SK-N-SH (cell line): ENCODE measurements at regions of chr9 and their contacts with region 1.

Region 1: GRCh38 chr9:131056781-131057506 is 39.4 kb upstream of the AIF1L start:
- DNase-seq: no peak
- H3K4me3 ChIP-seq: no peak overlapping the region
- H3K27ac ChIP-seq: no peak overlapping the region
- H3K4me1 ChIP-seq: peaks cover 0 to 3% of the 10 kb centered on the region in 2 experiments; a peak in 1 of 4 replicates
- H3K27me3 ChIP-seq: no peaks in the 10 kb centered on the region; the same call in 1 of the 2 replicates
- CTCF ChIP-seq: no peak
- EP300 ChIP-seq: no peak
- RAD21 ChIP-seq: no peak

Region 2: GRCh38 chr9:131076347-131077195 is 19.6 kb after region 1 on chr9:
- CTCF ChIA-PET with region 1: interaction called, 12 read pairs
- POLR2A ChIA-PET with region 1: no interaction called
- DNase-seq: no peak
- H3K4me3 ChIP-seq: no peak overlapping the region
- H3K27ac ChIP-seq: no peak overlapping the region
- H3K4me1 ChIP-seq: no peaks in the 10 kb centered on the region
- H3K27me3 ChIP-seq: 0 out of 2 replicates have a peak, but pooled peaks cover 6% of the 10 kb centered on the region
- CTCF ChIP-seq: no peak
- EP300 ChIP-seq: no peak
- RAD21 ChIP-seq: no peak

Region 3: GRCh38 chr9:131082774-131083512 is 26.0 kb after region 1 on chr9:
- CTCF ChIA-PET with region 1: interaction called, 15 read pairs
- POLR2A ChIA-PET with region 1: no interaction called
- DNase-seq: no peak
- H3K4me3 ChIP-seq: no peak overlapping the region
- H3K27ac ChIP-seq: no peak overlapping the region
- H3K4me1 ChIP-seq: no peaks in the 10 kb centered on the region; a peak in 1 of 4 replicates
- H3K27me3 ChIP-seq: peaks cover 14% of the 10 kb centered on the region; the same call in 1 of the 2 replicates
- CTCF ChIP-seq: no peak
- EP300 ChIP-seq: no peak
- RAD21 ChIP-seq: no peak

Region 4: DNA sequence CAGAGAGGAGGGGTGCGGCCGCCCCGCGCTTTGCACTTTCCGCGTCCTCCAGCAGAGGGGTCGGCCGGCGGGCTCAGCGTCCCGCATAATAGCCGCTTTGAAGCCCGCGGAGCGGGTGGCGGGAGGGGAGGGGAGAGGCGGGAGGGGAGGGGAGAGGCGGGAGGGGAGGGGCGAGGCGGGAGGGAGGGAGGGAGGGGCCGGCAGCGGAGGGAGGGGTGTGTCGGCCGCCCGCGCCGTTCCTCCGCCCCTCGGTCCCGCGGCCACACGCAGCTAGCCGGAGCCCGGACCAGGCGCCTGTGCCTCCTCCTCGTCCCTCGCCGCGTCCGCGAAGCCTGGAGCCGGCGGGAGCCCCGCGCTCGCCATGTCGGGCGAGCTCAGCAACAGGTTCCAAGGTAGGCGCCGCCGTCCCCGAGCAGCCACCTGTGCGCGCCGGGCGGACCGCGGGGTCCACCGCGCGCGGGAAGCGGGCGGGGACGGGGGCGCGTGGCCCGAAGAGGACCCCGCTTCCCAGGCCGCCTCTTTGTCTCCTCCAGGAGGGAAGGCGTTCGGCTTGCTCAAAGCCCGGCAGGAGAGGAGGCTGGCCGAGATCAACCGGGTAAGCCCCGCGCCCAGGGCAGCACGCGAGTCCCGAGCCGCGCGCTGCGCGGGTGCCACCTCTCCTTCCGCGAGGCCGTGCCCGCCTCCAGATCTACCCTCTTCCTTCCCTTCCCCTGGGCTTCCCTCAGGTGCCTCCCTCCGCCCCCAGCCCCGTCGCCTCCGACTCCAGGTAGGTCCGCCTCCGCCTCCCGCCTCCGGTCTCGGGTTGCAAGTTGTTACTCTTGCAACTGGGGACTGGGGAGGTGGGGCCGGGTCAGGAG is 39.6 kb after region 1 on chr9 and contains the start of gene AIF1L:
- CTCF ChIA-PET with region 1: interaction called, 15 read pairs
- POLR2A ChIA-PET with region 1: no interaction called
- DNase-seq: peak; percentile 93
- H3K4me3 ChIP-seq: peak within 1 kb of the TSS; percentile 49 to 53
- H3K27ac ChIP-seq: no peak within 1 kb of the TSS
- H3K4me1 ChIP-seq: peaks cover 0 to 24% of the 10 kb centered on the region in 2 experiments; a peak in 1 of 4 replicates
- H3K27me3 ChIP-seq: peaks cover 27% of the 10 kb centered on the region
- CTCF ChIP-seq: no peak
- EP300 ChIP-seq: no peak
- RAD21 ChIP-seq: no peak
- polyA plus RNA-seq, gene AIF1L: 0.26 and 0.50 TPM in 2 replicates

Region 5: GRCh38 chr9:131178382-131178781 is 121.4 kb after region 1 on chr9:
- CTCF ChIA-PET with region 1: interaction called, 12 read pairs
- POLR2A ChIA-PET with region 1: no interaction called
- DNase-seq: peak; percentile 83
- H3K4me3 ChIP-seq: no peak overlapping the region; a peak in 1 of 4 replicates
- H3K27ac ChIP-seq: peak overlapping the region in 1 of 2 experiments; percentile 96; a peak in 2 of 4 replicates
- H3K4me1 ChIP-seq: peaks cover 0 to 24% of the 10 kb centered on the region in 2 experiments; a peak in 2 of 4 replicates
- H3K27me3 ChIP-seq: no peaks in the 10 kb centered on the region
- CTCF ChIP-seq: peak; percentile 93
- EP300 ChIP-seq: no peak
- RAD21 ChIP-seq: peak; percentile 83